Psoas muscle (tissue), 8 donors: ENCODE measurements at regions of chr1 and their contacts with region 1.

Region 1: DNA sequence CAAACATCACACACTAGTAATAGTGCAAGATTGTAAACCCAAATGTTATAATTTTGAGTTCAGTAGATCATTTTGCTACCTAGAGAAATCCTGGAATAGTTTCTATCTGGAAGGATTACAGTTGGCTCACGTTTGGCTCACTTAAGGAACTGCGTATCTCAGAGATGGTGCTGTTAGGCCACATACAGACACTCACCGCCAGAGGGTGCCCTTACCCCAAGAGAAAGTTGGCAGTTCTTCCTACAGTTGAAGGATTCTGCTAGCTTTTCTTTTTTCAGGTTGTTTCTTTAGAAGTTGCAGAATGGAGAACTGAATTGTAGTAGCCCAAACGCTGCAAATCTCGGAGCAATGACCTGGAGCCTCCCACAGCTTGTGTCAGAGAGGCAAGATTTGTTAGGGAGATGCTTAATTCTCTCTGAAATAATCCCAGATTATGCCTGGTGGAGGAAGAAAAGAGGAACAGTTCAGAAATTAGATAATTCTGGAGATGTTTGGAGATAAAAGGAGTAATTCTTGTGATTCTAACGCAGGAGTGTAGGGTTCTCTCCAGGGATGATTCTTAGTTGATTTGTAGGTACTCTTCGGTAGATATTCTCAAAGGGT is 87.9 kb upstream of the PAPPA2 start:
- DNase-seq: peak; percentile 66 to 76
- ATAC-seq: peak; percentile 56 to 77 (median 72)
- H3K4me3 ChIP-seq: no peak overlapping the region
- H3K27ac ChIP-seq: no peak overlapping the region
- H3K4me1 ChIP-seq: no peaks in the 10 kb centered on the region
- H3K27me3 ChIP-seq: no peaks in the 10 kb centered on the region
- CTCF ChIP-seq: peak; percentile 79

Region 2: DNA sequence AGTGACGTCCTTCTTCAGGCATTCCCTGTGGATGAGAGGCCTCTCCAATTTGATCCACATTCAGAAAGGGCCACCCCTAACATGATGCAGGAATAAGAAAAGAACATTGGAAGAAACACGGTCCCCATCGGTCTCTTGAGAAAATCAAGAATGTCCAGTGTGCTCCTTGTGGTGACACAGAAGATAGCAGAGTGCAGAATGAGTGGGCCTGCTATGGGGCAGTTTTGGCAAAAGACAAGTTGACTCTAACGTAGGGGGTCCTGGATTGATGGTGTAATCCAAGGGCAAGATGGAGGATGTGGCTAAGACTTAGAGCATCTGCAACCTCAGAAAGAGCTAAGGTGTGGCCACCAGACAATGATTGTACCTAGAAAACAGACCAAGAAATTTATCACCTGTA is 122.9 kb before region 1 on chr1:
- intact Hi-C with region 1: no loop called
- DNase-seq: no peak
- ATAC-seq: no peak
- H3K4me3 ChIP-seq: no peak overlapping the region
- H3K27ac ChIP-seq: no peak overlapping the region
- H3K4me1 ChIP-seq: no peaks in the 10 kb centered on the region
- H3K27me3 ChIP-seq: no peaks in the 10 kb centered on the region
- CTCF ChIP-seq: no peak

Region 3: DNA sequence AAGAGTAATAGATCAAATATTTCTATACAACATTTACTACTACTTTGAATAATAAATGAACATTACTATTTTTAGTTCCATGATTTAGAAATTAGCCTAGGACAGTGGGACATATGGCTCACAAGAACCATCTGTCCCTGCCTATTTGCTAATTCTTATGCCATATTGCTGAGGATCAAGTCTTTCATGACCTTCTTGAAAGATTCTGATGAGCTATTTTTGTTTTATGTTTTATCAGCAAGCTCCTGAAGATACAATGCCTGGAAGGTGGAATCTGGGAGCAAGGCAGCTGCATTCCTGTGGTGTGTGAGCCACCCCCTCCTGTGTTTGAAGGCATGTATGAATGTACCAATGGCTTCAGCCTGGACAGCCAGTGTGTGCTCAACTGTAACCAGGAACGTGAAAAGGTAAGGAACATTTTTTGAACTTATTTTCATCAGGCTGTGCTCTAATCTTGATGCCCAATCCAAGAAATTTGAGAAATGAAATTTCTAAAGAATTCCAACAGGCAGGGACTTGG is 414.6 kb after region 1 on chr1:
- intact Hi-C with region 1: no loop called
- DNase-seq: no peak
- ATAC-seq: no peak
- H3K4me3 ChIP-seq: no peak overlapping the region
- H3K27ac ChIP-seq: no peak overlapping the region
- H3K4me1 ChIP-seq: no peaks in the 10 kb centered on the region
- H3K27me3 ChIP-seq: no peaks in the 10 kb centered on the region
- CTCF ChIP-seq: no peak

Region 4: GRCh38 chr1:176843352-176844297 is 468.6 kb after region 1 on chr1:
- intact Hi-C with region 1: loop called (anchors 2 to 10 kb)
- DNase-seq: peak in 1 of 2 donors; percentile 13
- ATAC-seq: peak; percentile 52 to 71 (median 59)
- H3K4me3 ChIP-seq: no peak overlapping the region
- H3K27ac ChIP-seq: no peak overlapping the region
- H3K4me1 ChIP-seq: no peaks in the 10 kb centered on the region
- H3K27me3 ChIP-seq: no peaks in the 10 kb centered on the region
- CTCF ChIP-seq: peak; percentile 72

Region 5: GRCh38 chr1:176880954-176881595 is 506.0 kb after region 1 on chr1:
- intact Hi-C with region 1: loop called (anchors 2 to 10 kb)
- DNase-seq: peak; percentile 65 to 82
- ATAC-seq: peak; percentile 82 to 91 (median 88)
- H3K4me3 ChIP-seq: no peak overlapping the region
- H3K27ac ChIP-seq: no peak overlapping the region
- H3K4me1 ChIP-seq: no peaks in the 10 kb centered on the region
- H3K27me3 ChIP-seq: no peaks in the 10 kb centered on the region
- CTCF ChIP-seq: peak; percentile 89